ENCODE measurements at regions of chrX and their contacts with region 1.

Region 1: GRCh38 chrX:2696698-2697215 is 5.7 kb downstream of the CD99 start:
- DNase-seq: peak; percentile 65
- H3K4me3 Mint-ChIP-seq: peak overlapping the region; percentile 68
- H3K27ac Mint-ChIP-seq: peak overlapping the region; percentile 92
- H3K4me1 Mint-ChIP-seq: peaks cover 73% of the 10 kb centered on the region
- H3K27me3 Mint-ChIP-seq: no peaks in the 10 kb centered on the region

Region 2: GRCh38 chrX:2608638-2609430 is 87.9 kb before region 1 on chrX:
- intact Hi-C with region 1: loop called (anchors 5 kb)
- DNase-seq: peak; percentile 87
- H3K4me3 Mint-ChIP-seq: peak overlapping the region; percentile 95
- H3K27ac Mint-ChIP-seq: peak overlapping the region; percentile 89
- H3K4me1 Mint-ChIP-seq: peaks cover 37% of the 10 kb centered on the region
- H3K27me3 Mint-ChIP-seq: no peaks in the 10 kb centered on the region

Region 3: DNA sequence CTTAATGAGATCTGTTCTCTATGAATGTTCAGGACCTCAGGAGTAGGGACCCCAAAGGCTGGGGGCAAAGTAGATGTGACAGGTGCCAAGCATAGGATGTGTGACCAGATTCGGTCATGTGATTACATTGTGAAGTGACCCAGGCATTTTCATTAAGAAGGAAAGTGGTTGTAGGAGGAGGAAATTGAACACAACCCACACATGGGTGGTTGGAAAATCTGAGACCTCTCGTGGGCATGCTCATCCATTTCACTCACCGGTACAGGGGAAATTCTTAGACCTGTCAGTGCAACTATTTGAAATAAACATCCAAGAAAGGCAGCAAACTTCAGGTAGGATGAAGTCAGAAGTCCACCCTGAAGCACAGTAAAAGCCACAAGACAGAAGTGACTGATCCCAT is 49.1 kb before region 1 on chrX:
- intact Hi-C with region 1: loop called (anchors 2 kb)
- DNase-seq: no peak
- H3K4me3 Mint-ChIP-seq: no peak overlapping the region
- H3K27ac Mint-ChIP-seq: peak overlapping the region; percentile 68
- H3K4me1 Mint-ChIP-seq: peaks cover 19% of the 10 kb centered on the region
- H3K27me3 Mint-ChIP-seq: no peaks in the 10 kb centered on the region

Region 4: DNA sequence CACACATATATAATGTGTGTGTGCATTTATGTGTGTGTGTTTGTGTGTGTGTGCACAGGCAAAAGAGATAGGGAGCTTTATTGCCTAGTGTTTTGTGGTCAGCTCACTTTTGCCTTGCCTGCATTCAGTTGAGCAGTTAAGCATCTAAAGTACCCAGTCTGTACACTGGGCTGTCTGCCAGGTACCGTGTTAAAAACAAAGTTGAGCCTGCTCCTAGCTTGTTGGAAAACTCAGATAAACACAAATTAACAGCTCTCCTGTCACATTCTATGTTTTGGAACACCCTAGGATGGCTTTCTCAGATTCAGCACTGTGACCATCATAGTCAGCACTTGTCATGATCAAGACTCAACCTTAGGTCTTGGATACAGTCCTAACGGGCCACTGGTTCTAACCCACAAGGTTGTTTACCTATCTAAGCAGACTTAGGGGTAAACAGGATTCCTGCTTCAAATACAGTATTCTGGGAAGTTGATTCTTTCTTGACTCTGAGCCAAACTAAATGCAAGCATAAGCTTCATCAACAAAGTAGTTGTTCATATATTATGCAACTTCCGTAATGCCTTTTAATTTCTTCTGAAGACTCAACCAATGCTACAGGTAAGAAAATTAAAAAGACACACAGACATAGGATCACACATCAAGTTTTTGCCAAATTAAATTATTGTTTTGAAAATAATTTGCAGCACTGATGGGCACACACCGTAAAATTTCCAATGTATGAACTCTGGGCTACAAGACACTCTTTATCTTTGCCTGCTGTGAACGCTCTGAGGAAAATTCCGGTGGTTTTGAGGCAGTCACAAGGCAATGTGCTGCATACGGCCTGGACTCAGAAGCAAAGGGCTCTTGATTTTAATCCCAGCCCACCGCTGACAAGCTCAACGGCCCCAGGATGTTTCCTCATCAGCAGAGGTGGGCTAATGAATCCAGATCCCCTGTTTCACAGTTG is 16.9 kb before region 1 on chrX:
- intact Hi-C with region 1: no loop called
- DNase-seq: no peak
- H3K4me3 Mint-ChIP-seq: no peak overlapping the region
- H3K27ac Mint-ChIP-seq: no peak overlapping the region
- H3K4me1 Mint-ChIP-seq: no peaks in the 10 kb centered on the region
- H3K27me3 Mint-ChIP-seq: peaks cover 15% of the 10 kb centered on the region

Region 5: DNA sequence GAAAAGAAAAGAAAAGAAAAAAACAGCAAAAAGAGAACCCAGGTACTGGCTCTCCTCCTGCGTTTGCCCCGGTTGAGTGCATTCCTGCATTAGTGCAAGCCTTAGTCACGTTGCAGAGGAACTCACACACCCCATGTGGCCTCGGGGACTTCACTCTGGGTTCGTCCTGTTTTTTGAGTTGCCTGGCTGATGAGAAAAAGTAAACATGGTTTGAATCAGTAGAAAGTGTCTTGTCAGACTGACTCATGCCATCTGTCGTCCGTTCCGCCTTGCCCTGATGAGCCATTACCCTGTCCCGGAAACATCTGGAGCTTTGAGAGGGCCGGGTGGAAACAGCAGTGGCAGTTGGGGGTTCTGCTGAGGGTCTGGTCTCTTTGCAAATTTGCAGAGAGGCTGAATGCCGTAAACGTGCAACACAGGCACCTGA is 10.6 kb after region 1 on chrX:
- intact Hi-C with region 1: loop called (anchors 1 kb)
- DNase-seq: peak; percentile 52
- H3K4me3 Mint-ChIP-seq: peak overlapping the region; percentile 45
- H3K27ac Mint-ChIP-seq: peak overlapping the region; percentile 98
- H3K4me1 Mint-ChIP-seq: peaks cover 79% of the 10 kb centered on the region
- H3K27me3 Mint-ChIP-seq: no peaks in the 10 kb centered on the region

Measured in activated T-helper 2 cell treated with anti-CD3 and anti-CD28 coated beads, Interferon-gamma antibody, Interleukin-2, Interleukin-4, amounts not matched to agents 10 μg/mL and 5 μg/mL and 100 μg/mL, durations not matched to agents 14 hours and 24 hours and 36 hours (primary cell).